Left colon (tissue), 2 donors: ENCODE measurements at regions of chr22 and their contacts with region 1.

Region 1: DNA sequence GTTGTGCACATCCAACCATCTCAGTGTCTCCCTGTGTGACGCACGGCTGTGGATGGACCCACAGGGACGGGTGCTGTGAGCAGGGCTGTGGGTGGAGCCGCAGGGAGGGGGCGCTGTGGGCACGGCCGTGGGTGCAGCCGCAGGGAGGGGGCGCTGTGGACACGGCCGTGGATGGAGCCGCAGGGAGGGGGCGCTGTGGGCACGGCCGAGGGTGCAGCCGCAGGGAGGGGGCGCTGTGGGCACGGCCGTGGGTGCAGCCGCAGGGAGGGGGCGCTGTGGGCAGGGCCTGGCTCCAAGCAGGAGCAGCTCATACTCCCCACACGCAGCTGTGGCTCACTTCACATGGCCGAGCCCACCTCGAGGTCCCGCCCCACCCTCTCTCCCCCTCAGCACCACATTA is 6.0 kb upstream of the MAPK11 start:
- DNase-seq: peak; percentile 65 to 71
- ATAC-seq: peak; percentile 62

Region 2: GRCh38 chr22:49930739-49931412 is 345.3 kb before region 1 on chr22:
- intact Hi-C with region 1: no loop called
- DNase-seq: peak; percentile 81 to 85
- ATAC-seq: peak; percentile 68

Region 3: GRCh38 chr22:50320671-50321325 is 44.7 kb after region 1 on chr22:
- intact Hi-C with region 1: loop called (anchors 5 to 10 kb)
- DNase-seq: no peak
- ATAC-seq: no peak

Region 4: GRCh38 chr22:50326959-50327710 is 51.0 kb after region 1 on chr22 and contains the start of gene DENND6B:
- intact Hi-C with region 1: loop called (anchors 5 to 10 kb)
- DNase-seq: peak; percentile 62 to 82
- ATAC-seq: peak; percentile 90
- total RNA-seq, gene DENND6B: 3.7 to 4.7 TPM